Spleen (tissue), 13 donors: ENCODE measurements at regions of chr6 and their contacts with region 1.

Region 1: GRCh38 chr6:7615611-7616383 is 25.8 kb downstream of the SNRNP48 start:
- DNase-seq: no peak
- H3K4me3 ChIP-seq: no peak overlapping the region
- H3K27ac ChIP-seq: no peak overlapping the region
- H3K4me1 ChIP-seq: peaks cover 6 to 29% (median 20%) of the 10 kb centered on the region in 6 donors
- H3K27me3 ChIP-seq: no peaks in the 10 kb centered on the region
- CTCF ChIP-seq: peak; percentile 41 to 79 (median 69)
- POLR2A ChIP-seq: no peak

Region 2: DNA sequence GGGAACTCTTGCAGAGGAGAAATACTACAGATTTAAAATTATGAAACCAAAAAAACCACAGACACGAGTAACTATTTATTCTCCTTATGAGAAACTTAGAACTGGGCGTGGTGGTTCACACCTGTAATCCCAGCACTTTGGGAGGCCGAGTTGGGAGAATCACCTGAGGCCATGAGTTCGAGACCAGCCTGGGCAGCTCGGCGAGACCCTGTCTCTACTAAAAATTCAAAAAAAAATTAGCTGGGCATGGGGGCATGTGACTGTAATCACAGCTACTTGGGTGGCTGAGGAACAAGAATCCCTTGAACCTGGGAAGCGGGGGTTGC is 339.6 kb before region 1 on chr6:
- intact Hi-C with region 1: loop called (anchors 5 kb)
- DNase-seq: no peak
- H3K4me3 ChIP-seq: no peak overlapping the region
- H3K27ac ChIP-seq: peak overlapping the region in 2 of 8 donors; percentile 69 to 79
- H3K4me1 ChIP-seq: peaks cover 0 to 47% (median 24%) of the 10 kb centered on the region in 6 donors
- H3K27me3 ChIP-seq: no peaks in the 10 kb centered on the region
- CTCF ChIP-seq: peak in 1 of 11 experiments; percentile 19
- POLR2A ChIP-seq: no peak

Region 3: GRCh38 chr6:7414811-7415210 is 201.0 kb before region 1 on chr6:
- intact Hi-C with region 1: loop called (anchors 10 kb)
- DNase-seq: no peak
- H3K4me3 ChIP-seq: no peak overlapping the region
- H3K27ac ChIP-seq: no peak overlapping the region
- H3K4me1 ChIP-seq: no peaks in the 10 kb centered on the region
- H3K27me3 ChIP-seq: no peaks in the 10 kb centered on the region
- CTCF ChIP-seq: no peak
- POLR2A ChIP-seq: no peak